Panc1 (cell line): ENCODE measurements at regions of chr18 and their contacts with region 1.

Region 1: GRCh38 chr18:24600076-24600654 is 139.7 kb downstream of the HRH4 start:
- DNase-seq: no peak
- ATAC-seq: peak; percentile 78; the same call in 1 of the 2 replicates
- H3K4me3 ChIP-seq: no peak overlapping the region
- H3K27ac ChIP-seq: no peak overlapping the region
- H3K4me1 ChIP-seq: no peaks in the 10 kb centered on the region
- H3K27me3 ChIP-seq: peaks cover 8% of the 10 kb centered on the region; the same call in 1 of the 2 replicates
- CTCF ChIP-seq: peak; percentile 69; the same call in 1 of the 2 replicates

Region 2: DNA sequence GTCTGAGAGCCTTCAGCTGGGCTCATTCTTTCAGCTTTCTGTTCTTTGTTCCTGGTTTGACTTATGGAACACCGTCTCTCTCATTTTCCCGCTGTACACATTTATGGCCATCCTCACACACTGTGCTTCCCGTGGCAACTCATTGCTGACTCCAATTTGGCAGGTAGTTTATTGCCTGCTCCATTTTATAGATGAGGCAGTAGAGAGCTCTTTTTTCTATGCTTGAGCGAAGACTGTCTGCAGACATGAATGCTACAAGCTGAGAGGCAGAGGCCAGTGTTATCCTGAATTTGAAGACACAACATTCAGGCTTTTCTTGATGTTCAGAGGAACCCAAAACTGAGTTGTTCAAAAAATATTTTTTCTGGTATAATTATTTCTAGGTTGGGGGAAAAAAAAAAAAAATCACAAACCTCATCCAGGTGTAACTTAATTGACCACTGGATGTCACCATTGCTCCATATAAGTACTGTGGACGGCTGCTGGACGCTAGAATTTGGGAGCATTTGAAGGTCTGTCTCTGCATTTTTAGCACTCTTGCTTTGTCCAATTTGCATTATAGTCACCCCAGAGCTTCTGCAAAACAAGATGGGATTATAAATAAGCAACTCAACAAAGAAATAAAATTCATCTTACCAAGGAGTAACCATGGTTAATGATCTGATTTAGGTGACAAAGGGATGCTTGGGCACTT is 56.2 kb before region 1 on chr18:
- CTCF ChIA-PET with region 1: no interaction called
- POLR2A ChIA-PET with region 1: no interaction called
- in situ Hi-C with region 1: no loop called
- intact Hi-C with region 1: loop called (anchors 2 kb)
- DNase-seq: no peak
- ATAC-seq: peak; percentile 78
- H3K4me3 ChIP-seq: no peak overlapping the region
- H3K27ac ChIP-seq: no peak overlapping the region
- H3K4me1 ChIP-seq: no peaks in the 10 kb centered on the region
- H3K27me3 ChIP-seq: no peaks in the 10 kb centered on the region; the same call in none of the 2 replicates
- CTCF ChIP-seq: peak; percentile 71

Region 3: GRCh38 chr18:24726727-24727492 is 126.7 kb after region 1 on chr18:
- CTCF ChIA-PET with region 1: interaction called, 3 read pairs
- POLR2A ChIA-PET with region 1: no interaction called
- in situ Hi-C with region 1: no loop called
- intact Hi-C with region 1: loop called (anchors 1 kb)
- DNase-seq: peak; percentile 28
- ATAC-seq: peak; percentile 87
- H3K4me3 ChIP-seq: peak overlapping the region; percentile 6 to 31; a peak in 3 of 4 replicates
- H3K27ac ChIP-seq: no peak overlapping the region
- H3K4me1 ChIP-seq: no peaks in the 10 kb centered on the region
- H3K27me3 ChIP-seq: peaks cover 13% of the 10 kb centered on the region
- CTCF ChIP-seq: peak; percentile 91

Region 4: DNA sequence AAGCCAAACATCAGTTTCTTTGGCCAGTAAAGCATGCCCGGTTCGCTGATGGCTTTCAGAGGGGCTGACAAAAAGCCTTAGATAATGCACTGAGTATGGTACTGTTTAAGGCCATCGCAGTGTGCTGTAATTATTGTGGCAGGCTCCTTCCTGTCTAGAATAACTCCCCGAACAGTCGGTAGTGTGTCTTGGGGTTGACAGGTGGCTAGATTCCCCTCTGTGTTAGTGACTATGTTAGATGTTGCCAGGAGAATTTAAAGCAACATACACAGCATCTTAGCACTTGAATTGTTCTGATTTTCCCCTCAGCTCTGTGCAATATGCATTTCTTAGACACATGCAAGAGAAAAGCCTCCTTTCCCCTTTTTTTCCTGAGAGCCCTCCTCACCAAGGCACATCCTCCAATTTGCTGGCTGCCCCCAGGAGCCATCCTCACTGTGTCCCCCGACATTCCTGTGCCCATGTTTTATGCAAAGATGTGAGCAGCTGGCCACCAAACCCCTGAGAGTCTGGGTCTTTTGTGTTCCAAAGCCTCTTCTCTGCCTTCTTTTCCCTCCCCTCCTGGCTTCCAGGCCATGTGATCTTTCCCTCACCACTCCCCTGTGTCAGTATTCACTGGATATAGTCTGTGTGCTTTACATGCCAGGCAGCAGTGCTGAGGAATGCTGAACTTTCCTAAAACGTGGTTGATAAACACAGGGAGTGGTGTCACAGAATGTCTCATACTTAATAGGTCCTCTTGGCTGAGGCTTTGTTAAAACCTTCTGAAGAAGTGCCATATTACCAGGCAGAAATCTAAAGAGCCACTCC is 191.8 kb after region 1 on chr18:
- CTCF ChIA-PET with region 1: no interaction called
- POLR2A ChIA-PET with region 1: no interaction called
- in situ Hi-C with region 1: no loop called
- intact Hi-C with region 1: no loop called
- DNase-seq: no peak
- ATAC-seq: no peak
- H3K4me3 ChIP-seq: no peak overlapping the region
- H3K27ac ChIP-seq: no peak overlapping the region
- H3K4me1 ChIP-seq: no peaks in the 10 kb centered on the region
- H3K27me3 ChIP-seq: no peaks in the 10 kb centered on the region; the same call in 1 of the 2 replicates
- CTCF ChIP-seq: no peak

Region 5: DNA sequence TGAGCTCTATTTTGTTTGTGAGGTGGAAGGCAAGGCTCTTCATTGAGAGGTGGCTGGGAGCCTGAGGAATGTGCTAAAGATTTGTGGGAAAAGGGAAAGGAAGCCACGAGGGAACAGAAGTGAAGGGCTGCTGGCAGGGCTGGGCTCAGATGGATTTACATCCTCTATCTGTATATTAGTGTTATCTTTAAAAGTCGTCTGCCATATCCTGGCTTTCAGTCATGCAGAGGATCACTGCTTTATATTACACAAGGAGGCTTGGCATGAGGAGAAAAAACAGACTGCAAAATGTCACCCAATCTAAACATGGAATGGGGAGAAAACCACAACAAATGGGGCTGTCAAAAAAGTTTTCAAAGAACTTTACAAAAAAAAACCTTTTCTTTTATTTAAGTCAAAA is 294.7 kb after region 1 on chr18:
- CTCF ChIA-PET with region 1: no interaction called
- POLR2A ChIA-PET with region 1: no interaction called
- in situ Hi-C with region 1: no loop called
- intact Hi-C with region 1: loop called (anchors 5 kb)
- DNase-seq: no peak
- ATAC-seq: no peak
- H3K4me3 ChIP-seq: no peak overlapping the region
- H3K27ac ChIP-seq: no peak overlapping the region
- H3K4me1 ChIP-seq: no peaks in the 10 kb centered on the region
- H3K27me3 ChIP-seq: no peaks in the 10 kb centered on the region
- CTCF ChIP-seq: no peak